ENCODE measurements at regions of chr2 and their contacts with region 1.

Region 1: GRCh38 chr2:26244309-26245121 is at the starts of genes HADHA and HADHB:
- DNase-seq: peak; percentile 90
- ATAC-seq: peak; percentile 80
- H3K4me3 Mint-ChIP-seq: peak within 1 kb of the TSS; percentile 99
- H3K27ac Mint-ChIP-seq: peak within 1 kb of the TSS; percentile 98
- H3K4me1 Mint-ChIP-seq: peaks cover 47% of the 10 kb centered on the region
- H3K27me3 Mint-ChIP-seq: no peaks in the 10 kb centered on the region
- total RNA-seq, gene HADHA: 149 to 154 TPM
- total RNA-seq, gene HADHB: 71.4 to 73.4 TPM

Region 2: GRCh38 chr2:25991965-25992364 is 252.6 kb before region 1 on chr2:
- CTCF ChIA-PET with region 1: interaction called, 3 read pairs
- POLR2A ChIA-PET with region 1: no interaction called
- intact Hi-C with region 1: loop called in 1 of 2 experiments (anchors 1 kb)
- DNase-seq: no peak
- ATAC-seq: peak; percentile 33
- H3K4me3 Mint-ChIP-seq: no peak overlapping the region
- H3K27ac Mint-ChIP-seq: no peak overlapping the region
- H3K4me1 Mint-ChIP-seq: peaks cover 8% of the 10 kb centered on the region
- H3K27me3 Mint-ChIP-seq: no peaks in the 10 kb centered on the region

Region 3: GRCh38 chr2:26025509-26025908 is 219.0 kb before region 1 on chr2:
- CTCF ChIA-PET with region 1: no interaction called
- POLR2A ChIA-PET with region 1: no interaction called
- intact Hi-C with region 1: no loop called
- DNase-seq: no peak
- ATAC-seq: no peak
- H3K4me3 Mint-ChIP-seq: no peak overlapping the region
- H3K27ac Mint-ChIP-seq: no peak overlapping the region
- H3K4me1 Mint-ChIP-seq: no peaks in the 10 kb centered on the region
- H3K27me3 Mint-ChIP-seq: no peaks in the 10 kb centered on the region

Region 4: GRCh38 chr2:26068602-26069298 is 175.8 kb before region 1 on chr2:
- CTCF ChIA-PET with region 1: no interaction called
- POLR2A ChIA-PET with region 1: no interaction called
- intact Hi-C with region 1: no loop called
- DNase-seq: peak; percentile 73
- ATAC-seq: peak; percentile 96
- H3K4me3 Mint-ChIP-seq: peak overlapping the region; percentile 41
- H3K27ac Mint-ChIP-seq: peak overlapping the region; percentile 89
- H3K4me1 Mint-ChIP-seq: peaks cover 58% of the 10 kb centered on the region
- H3K27me3 Mint-ChIP-seq: no peaks in the 10 kb centered on the region

Region 5: DNA sequence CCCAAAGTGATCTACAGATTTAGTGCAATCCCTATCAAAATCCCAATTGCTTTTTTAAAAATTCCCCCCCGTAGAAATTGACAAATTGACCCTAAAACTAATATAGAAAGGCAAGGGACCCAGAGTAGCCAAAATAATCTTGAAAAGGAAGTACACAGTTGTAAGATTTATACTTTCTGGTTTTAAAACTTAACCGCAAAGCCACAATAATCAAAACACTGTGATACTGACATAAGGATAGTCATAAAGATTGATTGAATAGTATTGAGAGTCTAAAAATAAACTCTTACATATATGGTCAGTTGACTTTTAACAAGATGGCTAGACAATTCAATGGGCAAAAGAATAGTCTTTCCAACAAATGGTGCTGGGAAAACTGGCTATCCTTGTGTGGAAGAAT is 130.4 kb before region 1 on chr2:
- CTCF ChIA-PET with region 1: no interaction called
- POLR2A ChIA-PET with region 1: no interaction called
- intact Hi-C with region 1: no loop called
- DNase-seq: no peak
- ATAC-seq: no peak
- H3K4me3 Mint-ChIP-seq: no peak overlapping the region
- H3K27ac Mint-ChIP-seq: no peak overlapping the region
- H3K4me1 Mint-ChIP-seq: peaks cover 8% of the 10 kb centered on the region
- H3K27me3 Mint-ChIP-seq: no peaks in the 10 kb centered on the region

Region 6: GRCh38 chr2:26164231-26164630 is 80.3 kb before region 1 on chr2:
- CTCF ChIA-PET with region 1: no interaction called
- POLR2A ChIA-PET with region 1: interaction called, 13 read pairs
- intact Hi-C with region 1: no loop called
- DNase-seq: no peak
- ATAC-seq: no peak
- H3K4me3 Mint-ChIP-seq: no peak overlapping the region
- H3K27ac Mint-ChIP-seq: no peak overlapping the region
- H3K4me1 Mint-ChIP-seq: no peaks in the 10 kb centered on the region
- H3K27me3 Mint-ChIP-seq: no peaks in the 10 kb centered on the region

Region 7: DNA sequence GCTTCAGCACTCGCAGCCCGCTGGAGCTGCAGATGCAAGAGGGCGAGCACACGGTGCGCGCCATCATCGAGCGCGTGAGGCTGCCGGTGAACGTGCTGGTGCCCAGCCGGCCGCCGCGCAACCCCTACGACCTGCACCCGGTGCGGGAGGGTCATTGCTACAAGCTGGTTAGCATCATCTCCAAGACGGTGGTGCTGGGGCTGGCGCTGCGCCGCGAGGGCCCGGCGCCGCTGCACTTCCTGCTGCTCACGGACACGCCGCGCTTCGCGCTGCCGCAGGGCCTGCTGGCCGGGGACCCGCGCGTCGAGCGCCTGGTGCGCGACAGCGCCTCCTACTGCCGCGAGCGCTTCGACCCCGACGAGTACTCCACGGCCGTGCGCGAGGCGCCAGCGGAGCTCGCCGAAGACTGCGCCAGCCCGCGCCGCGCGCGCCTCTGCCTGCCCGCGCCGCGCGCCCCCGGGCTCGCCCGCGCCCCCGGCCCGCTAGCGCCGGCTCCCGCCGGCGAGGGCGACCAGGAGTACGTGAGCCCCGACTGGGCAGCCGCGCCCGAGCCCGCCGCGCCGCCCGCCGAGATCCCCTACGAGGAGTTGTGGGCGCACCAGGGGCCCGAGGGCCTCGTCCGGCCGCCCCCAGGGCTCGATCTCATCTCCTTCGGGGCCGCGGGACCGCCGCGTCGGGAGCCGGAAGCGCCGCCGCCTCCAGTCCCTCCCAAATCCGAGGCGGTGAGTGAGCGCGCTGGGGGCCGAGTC is 59.8 kb before region 1 on chr2:
- CTCF ChIA-PET with region 1: interaction called, 11 read pairs
- POLR2A ChIA-PET with region 1: interaction called, 7 read pairs
- intact Hi-C with region 1: loop called in 1 of 2 experiments (anchors 1 kb)
- DNase-seq: peak; percentile 92
- ATAC-seq: peak; percentile 97
- H3K4me3 Mint-ChIP-seq: peak overlapping the region; percentile 75
- H3K27ac Mint-ChIP-seq: peak overlapping the region; percentile 60
- H3K4me1 Mint-ChIP-seq: peaks cover 16% of the 10 kb centered on the region
- H3K27me3 Mint-ChIP-seq: peaks cover 15% of the 10 kb centered on the region

Region 8: DNA sequence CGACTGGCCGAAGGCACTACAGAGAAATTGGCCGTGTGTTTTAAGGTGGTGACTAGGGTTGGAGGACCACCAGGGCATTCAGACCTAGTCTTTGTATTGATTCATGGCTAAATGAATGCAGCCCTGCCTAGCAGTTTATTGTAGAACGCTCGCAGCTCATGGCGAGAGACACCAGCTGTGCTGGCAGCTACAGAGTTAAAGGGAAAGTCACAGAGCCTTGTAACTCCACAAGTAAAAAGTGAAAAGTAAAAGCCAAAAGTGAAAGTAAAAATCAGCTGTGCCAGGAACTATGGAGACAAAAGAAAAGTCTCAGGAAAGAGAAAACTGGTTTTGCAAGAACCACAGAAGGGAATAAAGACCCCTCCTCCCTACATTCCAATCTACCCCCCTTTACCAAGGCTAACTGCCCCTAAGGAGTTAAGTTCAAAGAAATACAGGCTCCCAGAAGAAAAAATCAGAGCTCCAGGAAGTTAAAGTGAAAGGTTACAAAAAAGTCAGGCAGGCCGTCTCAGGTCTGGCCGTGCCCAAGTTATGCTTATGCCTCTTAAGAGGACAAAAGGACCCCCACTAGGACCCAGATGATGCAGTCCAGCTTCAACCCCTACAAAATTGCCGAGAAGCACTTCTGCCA is 55.1 kb after region 1 on chr2:
- CTCF ChIA-PET with region 1: interaction called, 7 read pairs
- POLR2A ChIA-PET with region 1: no interaction called
- intact Hi-C with region 1: loop called (anchors 1 kb)
- DNase-seq: peak; percentile 51
- ATAC-seq: peak; percentile 56
- H3K4me3 Mint-ChIP-seq: no peak overlapping the region
- H3K27ac Mint-ChIP-seq: no peak overlapping the region
- H3K4me1 Mint-ChIP-seq: no peaks in the 10 kb centered on the region
- H3K27me3 Mint-ChIP-seq: no peaks in the 10 kb centered on the region

Region 9: DNA sequence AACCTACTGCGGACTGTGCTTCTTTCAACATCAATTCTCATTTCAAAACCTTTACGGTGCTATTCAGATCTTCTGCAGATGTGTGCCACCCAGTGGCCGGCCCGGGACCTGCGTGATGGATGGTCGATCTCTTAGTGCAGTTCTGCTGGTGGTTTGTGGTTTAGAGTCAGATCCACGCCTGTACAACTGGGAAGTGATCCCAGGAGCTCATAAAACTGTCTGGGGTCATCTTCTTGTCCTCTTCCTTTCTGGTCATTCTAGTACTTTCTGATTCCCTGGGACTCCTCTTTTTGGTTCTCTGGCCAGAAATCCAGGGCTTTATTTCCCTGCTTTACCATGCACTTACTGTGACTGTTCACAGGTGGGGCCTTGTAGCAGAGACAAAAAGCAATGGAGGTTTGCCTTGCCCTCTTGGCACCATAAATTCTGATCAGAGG is 85.6 kb after region 1 on chr2:
- CTCF ChIA-PET with region 1: interaction called, 9 read pairs
- POLR2A ChIA-PET with region 1: no interaction called
- intact Hi-C with region 1: loop called (anchors 1 to 2 kb)
- DNase-seq: peak; percentile 94
- ATAC-seq: peak; percentile 97
- H3K4me3 Mint-ChIP-seq: no peak overlapping the region
- H3K27ac Mint-ChIP-seq: no peak overlapping the region
- H3K4me1 Mint-ChIP-seq: peaks cover 9% of the 10 kb centered on the region
- H3K27me3 Mint-ChIP-seq: no peaks in the 10 kb centered on the region

Region 10: GRCh38 chr2:26401739-26402541 is 157.4 kb after region 1 on chr2 and contains the start of gene DRC1:
- CTCF ChIA-PET with region 1: no interaction called
- POLR2A ChIA-PET with region 1: no interaction called
- intact Hi-C with region 1: no loop called
- DNase-seq: peak; percentile 64
- ATAC-seq: peak; percentile 62
- H3K4me3 Mint-ChIP-seq: no peak within 1 kb of the TSS
- H3K27ac Mint-ChIP-seq: no peak within 1 kb of the TSS
- H3K4me1 Mint-ChIP-seq: peaks cover 8% of the 10 kb centered on the region
- H3K27me3 Mint-ChIP-seq: peaks cover 13% of the 10 kb centered on the region
- total RNA-seq, gene DRC1: not detected

Region 11: DNA sequence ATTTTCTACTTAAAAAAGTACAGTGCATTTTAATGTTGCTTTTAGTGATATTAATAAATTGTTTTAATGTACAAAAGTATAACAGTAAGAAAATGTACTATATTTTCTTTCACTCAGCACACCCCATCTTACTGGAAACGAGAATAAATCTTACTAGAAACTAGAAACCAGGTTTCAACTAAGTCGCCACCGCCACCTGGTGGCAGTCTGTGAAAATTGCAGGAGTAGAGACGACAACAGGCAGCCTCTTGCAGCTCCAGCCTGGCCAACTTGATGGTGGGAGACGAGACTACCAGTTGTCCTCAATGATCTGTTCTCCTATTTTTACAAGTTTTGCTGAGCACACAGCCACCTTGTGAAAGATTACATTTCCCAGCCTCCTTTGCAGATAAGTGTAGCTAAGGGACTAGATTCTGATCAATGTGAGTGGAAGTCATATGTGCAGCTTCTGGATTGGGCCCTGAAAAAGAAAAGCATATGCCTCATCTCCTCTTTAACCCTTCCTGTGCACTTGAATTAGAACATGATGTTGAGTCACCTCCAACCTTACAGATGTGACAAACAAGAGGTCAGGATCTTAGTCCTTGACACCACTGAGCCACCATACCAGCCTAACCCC is 224.7 kb after region 1 on chr2:
- CTCF ChIA-PET with region 1: interaction called, 4 read pairs
- POLR2A ChIA-PET with region 1: interaction called, 3 read pairs
- intact Hi-C with region 1: loop called in 1 of 2 experiments (anchors 5 kb)
- DNase-seq: peak; percentile 88
- ATAC-seq: peak; percentile 80
- H3K4me3 Mint-ChIP-seq: no peak overlapping the region
- H3K27ac Mint-ChIP-seq: no peak overlapping the region
- H3K4me1 Mint-ChIP-seq: no peaks in the 10 kb centered on the region
- H3K27me3 Mint-ChIP-seq: no peaks in the 10 kb centered on the region

Measured in activated CD4-positive, alpha-beta T cell treated with anti-CD3 and anti-CD28 coated beads for 36 hours (primary cell).